Endothelial cell of umbilical vein (primary cell): ENCODE measurements at regions of chr3 and their contacts with region 1.

Region 1: DNA sequence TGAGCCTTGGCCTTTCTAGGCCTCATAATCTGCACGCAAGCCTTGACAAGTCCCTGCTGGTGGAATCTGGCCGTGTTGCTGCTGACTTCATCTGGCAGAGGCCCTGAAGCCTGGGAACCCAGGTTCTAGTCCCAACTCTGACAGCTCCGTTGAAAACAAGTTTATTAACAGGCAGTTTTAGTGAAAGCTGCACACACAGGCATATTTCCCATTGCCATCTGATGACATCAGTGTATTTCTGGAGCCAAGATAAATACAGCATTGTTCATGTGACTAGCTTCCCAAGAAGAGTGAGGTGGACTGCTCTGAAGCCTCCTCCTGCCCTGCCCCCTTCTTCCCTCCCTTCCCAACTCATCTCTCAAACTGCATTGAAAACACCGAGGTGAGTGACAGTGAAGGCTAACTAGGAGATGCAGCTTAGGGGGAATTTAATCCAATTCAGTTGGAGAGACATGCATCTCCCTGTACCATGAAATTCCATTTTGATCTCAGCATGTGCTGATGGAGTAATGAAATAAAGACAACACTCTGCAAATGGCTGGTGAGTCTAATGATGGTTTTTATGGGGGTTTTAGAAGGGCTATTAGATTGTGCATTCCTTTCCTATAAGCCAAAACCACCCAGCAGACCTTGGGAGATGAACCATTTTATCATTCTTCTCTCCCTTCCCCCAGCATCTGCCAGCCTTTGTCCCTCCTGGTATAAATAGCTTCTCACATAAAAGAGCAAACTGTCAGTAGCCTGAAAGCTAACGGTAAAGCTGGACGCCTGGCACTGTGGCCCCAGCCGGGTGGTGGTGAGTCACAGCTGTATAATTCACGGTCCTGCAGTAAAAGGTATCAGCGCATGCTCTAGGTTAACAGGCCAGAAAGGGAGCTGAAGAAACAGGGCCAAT is 38.0 kb downstream of the PRICKLE2 start:
- DNase-seq: peak; percentile 100
- H3K4me3 ChIP-seq: peak overlapping the region in 1 of 3 experiments; percentile 4
- H3K27ac ChIP-seq: peak overlapping the region; percentile 84
- H3K4me1 ChIP-seq: peaks cover 40% of the 10 kb centered on the region
- H3K27me3 ChIP-seq: no peaks in the 10 kb centered on the region
- CTCF ChIP-seq: peak in 1 of 2 donors; percentile 15
- POLR2A ChIP-seq: no peak

Region 2: GRCh38 chr3:63565220-63565619 is 622.1 kb before region 1 on chr3:
- CTCF ChIA-PET with region 1: no interaction called
- POLR2A ChIA-PET with region 1: no interaction called
- dilution Hi-C with region 1: no loop called
- intact Hi-C with region 1: no loop called
- DNase-seq: no peak
- H3K4me3 ChIP-seq: no peak overlapping the region
- H3K27ac ChIP-seq: no peak overlapping the region
- H3K4me1 ChIP-seq: no peaks in the 10 kb centered on the region
- H3K27me3 ChIP-seq: no peaks in the 10 kb centered on the region
- CTCF ChIP-seq: no peak
- POLR2A ChIP-seq: no peak

Region 3: GRCh38 chr3:64030741-64031140 is 156.6 kb before region 1 on chr3:
- CTCF ChIA-PET with region 1: interaction called, 3 read pairs
- POLR2A ChIA-PET with region 1: no interaction called
- dilution Hi-C with region 1: no loop called
- intact Hi-C with region 1: loop called (anchors 1 kb)
- DNase-seq: peak; percentile 66
- H3K4me3 ChIP-seq: peak overlapping the region in 1 of 3 experiments; percentile 4
- H3K27ac ChIP-seq: no peak overlapping the region
- H3K4me1 ChIP-seq: no peaks in the 10 kb centered on the region
- H3K27me3 ChIP-seq: peaks cover 19 to 45% of the 10 kb centered on the region in 2 experiments
- CTCF ChIP-seq: peak; percentile 77 to 82
- POLR2A ChIP-seq: no peak

Region 4: DNA sequence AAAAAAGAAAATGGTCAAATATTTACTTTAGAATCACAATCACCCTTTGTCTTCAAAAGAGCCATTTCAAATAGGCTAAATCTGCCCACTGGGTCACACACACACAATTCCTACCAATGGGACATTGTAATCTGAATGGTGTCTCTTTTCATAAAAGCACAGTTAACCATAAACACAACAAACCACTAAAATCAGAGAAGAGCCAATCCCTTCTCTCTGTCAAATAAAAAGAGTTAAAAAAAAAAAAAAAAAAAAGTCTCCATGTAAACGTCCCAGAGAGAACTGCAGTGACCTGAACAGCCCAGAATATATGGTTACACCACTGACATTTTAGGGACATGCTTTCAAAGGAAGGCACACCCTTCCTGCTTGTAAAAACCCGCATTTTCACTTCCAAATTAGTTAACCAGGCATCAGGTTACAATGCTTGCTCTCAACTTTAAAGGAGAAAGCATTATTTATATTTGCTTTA is 25.8 kb before region 1 on chr3:
- CTCF ChIA-PET with region 1: no interaction called
- POLR2A ChIA-PET with region 1: no interaction called
- dilution Hi-C with region 1: no loop called
- intact Hi-C with region 1: no loop called
- DNase-seq: no peak
- H3K4me3 ChIP-seq: no peak overlapping the region
- H3K27ac ChIP-seq: no peak overlapping the region
- H3K4me1 ChIP-seq: no peaks in the 10 kb centered on the region
- H3K27me3 ChIP-seq: no peaks in the 10 kb centered on the region
- CTCF ChIP-seq: no peak
- POLR2A ChIP-seq: no peak

Region 5: DNA sequence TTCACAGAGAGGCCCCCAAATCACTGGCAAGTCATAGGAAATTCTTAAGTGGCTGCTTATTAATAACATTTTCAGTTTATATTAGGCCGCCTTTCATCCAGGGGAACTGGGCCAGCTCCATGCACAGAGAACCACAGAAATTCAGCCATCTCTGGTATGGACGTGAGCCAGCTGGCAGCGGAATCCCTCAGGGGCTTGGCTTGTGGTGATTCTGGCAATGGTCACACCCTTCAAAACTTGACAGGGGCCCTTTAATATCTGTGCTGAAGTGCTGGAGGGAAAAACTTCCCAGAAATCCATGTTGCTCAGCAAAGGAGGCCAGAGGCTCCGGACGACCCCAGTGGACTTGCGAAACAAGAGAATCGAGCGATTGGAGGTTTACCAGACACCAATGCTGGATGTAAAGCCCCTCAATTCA is 26.7 kb after region 1 on chr3:
- CTCF ChIA-PET with region 1: interaction called, 10 read pairs
- POLR2A ChIA-PET with region 1: interaction called, 9 read pairs
- dilution Hi-C with region 1: no loop called
- intact Hi-C with region 1: loop called (anchors 1 kb)
- DNase-seq: peak; percentile 83
- H3K4me3 ChIP-seq: peak overlapping the region in 2 of 3 experiments; percentile 3 to 20
- H3K27ac ChIP-seq: peak overlapping the region; percentile 15
- H3K4me1 ChIP-seq: peaks cover 35% of the 10 kb centered on the region
- H3K27me3 ChIP-seq: no peaks in the 10 kb centered on the region
- CTCF ChIP-seq: no peak
- POLR2A ChIP-seq: no peak

Region 6: DNA sequence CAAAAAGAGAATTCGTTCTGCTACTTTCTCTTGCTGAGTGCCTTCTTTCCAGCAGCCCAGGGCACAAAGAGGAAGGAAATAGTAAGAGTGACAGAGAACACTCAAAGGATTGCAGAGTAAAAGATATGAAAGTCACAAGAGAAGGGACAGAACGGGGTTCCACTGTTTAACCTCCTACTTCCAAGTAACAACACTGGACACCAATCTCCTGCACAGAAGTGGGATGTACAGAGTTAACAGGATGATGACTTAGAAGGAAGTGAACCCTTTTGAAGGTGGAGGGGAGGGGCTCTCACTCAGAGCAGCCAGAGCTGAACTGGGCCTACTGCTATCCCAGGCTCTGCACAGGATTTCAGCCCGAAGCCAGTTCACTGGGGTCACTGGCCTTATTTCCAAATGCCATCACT is 168.1 kb after region 1 on chr3:
- CTCF ChIA-PET with region 1: no interaction called
- POLR2A ChIA-PET with region 1: no interaction called
- dilution Hi-C with region 1: no loop called
- intact Hi-C with region 1: loop called (anchors 5 kb)
- DNase-seq: peak; percentile 78
- H3K4me3 ChIP-seq: no peak overlapping the region
- H3K27ac ChIP-seq: peak overlapping the region; percentile 48
- H3K4me1 ChIP-seq: peaks cover 46% of the 10 kb centered on the region
- H3K27me3 ChIP-seq: no peaks in the 10 kb centered on the region
- CTCF ChIP-seq: no peak
- POLR2A ChIP-seq: no peak